Esophagus squamous epithelium (tissue), 5 donors: ENCODE measurements at regions of chr7 and their contacts with region 1.

Region 1: GRCh38 chr7:139784648-139785047 is 6.8 kb upstream of the HIPK2 start:
- DNase-seq: no peak
- H3K4me3 ChIP-seq: no peak overlapping the region
- H3K27ac ChIP-seq: peak overlapping the region in 2 of 4 donors; percentile 65 to 72
- H3K4me1 ChIP-seq: peaks cover 4 to 56% (median 27%) of the 10 kb centered on the region in 3 donors
- H3K27me3 ChIP-seq: no peaks in the 10 kb centered on the region
- CTCF ChIP-seq: no peak
- POLR2A ChIP-seq: no peak

Region 2: GRCh38 chr7:139731802-139732470 is 52.7 kb before region 1 on chr7:
- intact Hi-C with region 1: no loop called
- DNase-seq: peak; percentile 14
- H3K4me3 ChIP-seq: peak overlapping the region in 1 of 4 donors; percentile 27
- H3K27ac ChIP-seq: peak overlapping the region; percentile 37 to 85 (median 68)
- H3K4me1 ChIP-seq: peaks cover 38 to 77% (median 41%) of the 10 kb centered on the region in 3 donors
- H3K27me3 ChIP-seq: no peaks in the 10 kb centered on the region
- CTCF ChIP-seq: no peak
- POLR2A ChIP-seq: no peak

Region 3: DNA sequence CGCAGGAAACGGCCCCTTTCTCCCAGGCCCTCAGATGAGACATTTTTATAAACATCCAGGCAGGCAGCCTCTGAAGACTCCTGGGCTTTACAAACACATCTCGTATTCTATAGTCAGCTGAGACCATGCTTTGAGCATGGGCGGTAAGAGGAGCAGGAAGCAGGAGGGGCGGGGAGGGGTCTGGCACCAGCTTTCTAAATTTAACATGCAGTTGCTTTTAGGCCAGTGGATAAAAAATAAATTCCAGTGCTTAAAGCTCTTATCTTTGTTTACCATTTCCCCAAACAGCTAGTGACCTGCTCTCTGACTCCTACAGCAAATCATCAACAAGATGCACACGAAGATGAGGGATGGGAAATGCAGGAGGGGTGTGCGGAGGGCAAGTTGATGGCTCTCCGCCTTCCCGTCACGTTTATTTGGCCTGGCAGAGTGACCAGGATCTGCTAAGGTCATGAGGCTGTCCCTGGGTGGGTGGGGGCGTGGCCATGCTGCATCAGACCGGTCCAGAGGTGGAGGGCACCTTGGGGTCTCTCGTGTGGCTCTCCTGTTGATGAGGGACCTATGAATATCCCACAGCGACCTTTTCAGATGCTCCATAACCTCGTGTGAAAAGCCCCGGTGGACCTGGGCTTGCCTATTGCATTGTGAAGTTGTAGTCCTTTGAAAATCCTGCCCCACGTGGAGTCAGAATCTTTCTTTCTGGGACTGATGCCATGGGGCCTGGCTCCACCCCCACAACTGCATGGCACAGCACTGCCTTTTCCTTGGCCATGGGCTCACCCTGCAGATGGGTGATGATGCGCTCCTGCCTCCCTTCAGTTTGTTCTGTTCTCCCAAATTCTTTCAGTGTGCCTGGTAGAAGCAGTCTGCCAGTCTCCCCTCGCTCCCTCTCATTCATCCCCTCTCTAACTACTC is 210.6 kb after region 1 on chr7:
- intact Hi-C with region 1: loop called (anchors 5 kb)
- DNase-seq: no peak
- H3K4me3 ChIP-seq: no peak overlapping the region
- H3K27ac ChIP-seq: no peak overlapping the region
- H3K4me1 ChIP-seq: peaks cover 0 to 5% (median 0%) of the 10 kb centered on the region in 3 donors
- H3K27me3 ChIP-seq: no peaks in the 10 kb centered on the region
- CTCF ChIP-seq: no peak
- POLR2A ChIP-seq: no peak